Activated CD4-positive, alpha-beta T cell treated with anti-CD3 and anti-CD28 coated beads for 36 hours (primary cell): ENCODE measurements at regions of chr2 and their contacts with region 1.

Region 1: DNA sequence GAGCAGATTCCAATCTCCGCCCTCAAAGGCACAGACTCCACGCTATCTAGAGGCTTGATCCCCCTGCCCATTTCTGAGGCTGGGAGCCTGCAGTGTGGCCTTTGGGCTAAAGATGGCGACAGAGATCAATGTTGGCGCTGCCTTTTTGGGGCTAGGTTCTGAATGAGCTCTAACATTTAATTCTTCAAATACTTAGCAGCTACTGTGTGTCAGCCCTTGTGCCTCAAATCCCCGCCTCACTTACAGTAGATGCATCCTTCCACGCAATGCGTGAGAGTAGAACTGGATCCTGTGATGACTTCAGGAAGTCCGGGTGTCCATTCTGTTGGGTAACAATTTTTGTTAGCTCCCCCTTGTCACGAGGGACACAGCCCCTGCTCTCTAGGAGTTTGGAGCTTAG is 12.4 kb downstream of the IL1F10 start:
- DNase-seq: peak; percentile 73
- ATAC-seq: peak; percentile 73
- H3K4me3 Mint-ChIP-seq: no peak overlapping the region
- H3K27ac Mint-ChIP-seq: no peak overlapping the region
- H3K4me1 Mint-ChIP-seq: peaks cover 15% of the 10 kb centered on the region
- H3K27me3 Mint-ChIP-seq: no peaks in the 10 kb centered on the region

Region 2: DNA sequence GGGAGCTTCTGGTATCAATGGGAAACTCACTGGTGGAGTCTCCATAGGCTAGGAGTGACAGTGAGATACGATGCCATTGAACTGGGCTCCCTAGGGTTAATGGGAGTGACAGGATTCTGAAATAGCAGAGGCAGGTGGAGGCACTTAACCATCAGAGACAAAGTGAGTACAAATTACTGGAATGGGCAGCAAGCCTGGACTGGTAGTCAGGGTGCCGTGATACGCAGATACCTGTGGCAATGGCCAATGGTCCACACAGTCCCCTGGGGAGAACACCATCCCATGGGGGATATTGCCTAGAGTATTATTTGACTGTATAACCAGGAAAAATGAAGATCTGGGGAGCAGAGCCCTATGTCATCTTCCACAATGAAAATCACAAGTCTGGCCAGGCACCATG is 478.4 kb before region 1 on chr2:
- CTCF ChIA-PET with region 1: no interaction called
- POLR2A ChIA-PET with region 1: no interaction called
- intact Hi-C with region 1: no loop called
- DNase-seq: no peak
- ATAC-seq: no peak
- H3K4me3 Mint-ChIP-seq: no peak overlapping the region
- H3K27ac Mint-ChIP-seq: no peak overlapping the region
- H3K4me1 Mint-ChIP-seq: peaks cover 4% of the 10 kb centered on the region
- H3K27me3 Mint-ChIP-seq: no peaks in the 10 kb centered on the region

Region 3: GRCh38 chr2:113173542-113174395 is 93.6 kb after region 1 on chr2 and contains the start of gene PSD4:
- CTCF ChIA-PET with region 1: interaction called, 9 read pairs
- POLR2A ChIA-PET with region 1: no interaction called
- intact Hi-C with region 1: loop called (anchors 2 kb)
- DNase-seq: peak; percentile 95
- ATAC-seq: peak; percentile 81
- H3K4me3 Mint-ChIP-seq: peak within 1 kb of the TSS; percentile 91
- H3K27ac Mint-ChIP-seq: peak within 1 kb of the TSS; percentile 99
- H3K4me1 Mint-ChIP-seq: peaks cover 73% of the 10 kb centered on the region
- H3K27me3 Mint-ChIP-seq: no peaks in the 10 kb centered on the region
- total RNA-seq, gene PSD4: 232 to 274 TPM

Region 4: GRCh38 chr2:113190871-113191270 is 110.7 kb after region 1 on chr2:
- CTCF ChIA-PET with region 1: interaction called, 10 read pairs
- POLR2A ChIA-PET with region 1: no interaction called
- intact Hi-C with region 1: loop called in 1 of 2 experiments (anchors 5 kb)
- DNase-seq: no peak
- ATAC-seq: no peak
- H3K4me3 Mint-ChIP-seq: no peak overlapping the region
- H3K27ac Mint-ChIP-seq: no peak overlapping the region
- H3K4me1 Mint-ChIP-seq: peaks cover 33% of the 10 kb centered on the region
- H3K27me3 Mint-ChIP-seq: no peaks in the 10 kb centered on the region

Region 5: DNA sequence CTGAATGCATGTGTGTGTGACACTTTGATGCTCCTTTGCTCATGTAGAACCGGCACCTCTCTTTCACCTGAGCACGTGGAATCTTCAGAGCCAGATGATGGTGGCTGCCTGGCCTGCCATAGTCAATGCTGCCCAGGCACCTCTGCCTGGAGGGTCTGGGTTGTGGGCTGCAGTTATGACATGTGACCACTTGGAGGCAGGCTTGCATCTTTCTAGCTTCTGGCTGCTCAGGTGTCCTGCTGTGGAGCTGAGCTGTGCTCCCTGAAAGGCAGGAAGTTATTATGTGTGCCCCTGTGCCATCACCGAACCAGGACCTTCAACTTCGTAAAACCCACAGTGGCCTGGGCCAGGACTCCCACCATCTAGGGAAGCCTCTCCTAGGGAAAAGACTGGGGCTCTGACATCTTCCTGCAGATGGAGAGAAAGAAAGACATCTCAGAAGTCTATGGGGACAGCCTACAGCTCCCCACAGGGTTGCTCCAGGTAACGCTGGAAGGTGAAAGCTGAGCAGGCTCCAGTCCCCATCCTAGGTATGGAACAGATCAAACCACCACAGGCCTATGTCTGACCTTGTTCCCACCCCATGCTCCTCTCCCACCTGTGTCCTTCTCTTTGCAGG is 123.9 kb after region 1 on chr2:
- CTCF ChIA-PET with region 1: interaction called, 24 read pairs
- POLR2A ChIA-PET with region 1: no interaction called
- intact Hi-C with region 1: loop called (anchors 2 to 5 kb)
- DNase-seq: peak; percentile 85
- ATAC-seq: peak; percentile 83
- H3K4me3 Mint-ChIP-seq: no peak overlapping the region
- H3K27ac Mint-ChIP-seq: peak overlapping the region; percentile 63
- H3K4me1 Mint-ChIP-seq: peaks cover 18% of the 10 kb centered on the region
- H3K27me3 Mint-ChIP-seq: no peaks in the 10 kb centered on the region

Region 6: GRCh38 chr2:113248997-113249770 is 169.1 kb after region 1 on chr2:
- CTCF ChIA-PET with region 1: interaction called, 8 read pairs
- POLR2A ChIA-PET with region 1: interaction called, 3 read pairs
- intact Hi-C with region 1: loop called (anchors 5 kb)
- DNase-seq: peak; percentile 88
- ATAC-seq: peak; percentile 77
- H3K4me3 Mint-ChIP-seq: no peak overlapping the region
- H3K27ac Mint-ChIP-seq: no peak overlapping the region
- H3K4me1 Mint-ChIP-seq: peaks cover 44% of the 10 kb centered on the region
- H3K27me3 Mint-ChIP-seq: no peaks in the 10 kb centered on the region

Region 7: GRCh38 chr2:113390124-113390849 is 310.2 kb after region 1 on chr2:
- CTCF ChIA-PET with region 1: interaction called, 5 read pairs
- POLR2A ChIA-PET with region 1: no interaction called
- intact Hi-C with region 1: loop called in 1 of 2 experiments (anchors 1 kb)
- DNase-seq: peak; percentile 71
- ATAC-seq: peak; percentile 85
- H3K4me3 Mint-ChIP-seq: peak overlapping the region; percentile 52
- H3K27ac Mint-ChIP-seq: peak overlapping the region; percentile 27
- H3K4me1 Mint-ChIP-seq: peaks cover 12% of the 10 kb centered on the region
- H3K27me3 Mint-ChIP-seq: peaks cover 5% of the 10 kb centered on the region

Region 8: DNA sequence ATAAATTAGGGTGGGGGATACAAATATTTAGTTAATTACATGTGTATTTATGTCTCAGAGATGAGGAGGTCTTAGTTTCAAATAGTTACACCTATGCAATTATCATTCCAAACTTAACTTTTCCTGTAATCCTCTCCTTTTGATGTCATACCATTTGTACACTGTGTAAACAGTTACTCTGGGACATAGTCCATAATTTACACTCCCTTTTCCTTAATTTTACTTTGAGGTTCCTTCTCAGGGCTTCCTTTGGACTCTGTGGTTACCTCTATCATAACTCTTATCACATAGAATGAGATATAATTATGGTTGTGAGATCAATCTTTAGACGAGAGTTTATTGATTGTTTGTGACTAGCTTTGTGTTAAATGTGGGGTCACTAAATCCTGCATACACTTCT is 1446.7 kb after region 1 on chr2:
- CTCF ChIA-PET with region 1: no interaction called
- POLR2A ChIA-PET with region 1: no interaction called
- intact Hi-C with region 1: no loop called
- DNase-seq: no peak
- ATAC-seq: no peak
- H3K4me3 Mint-ChIP-seq: no peak overlapping the region
- H3K27ac Mint-ChIP-seq: no peak overlapping the region
- H3K4me1 Mint-ChIP-seq: no peaks in the 10 kb centered on the region
- H3K27me3 Mint-ChIP-seq: peaks cover 2% of the 10 kb centered on the region